A673 (cell line): ENCODE measurements at regions of chr3 and their contacts with region 1.

Region 1: GRCh38 chr3:146747928-146748327 is 142.8 kb upstream of the PLSCR5 start:
- DNase-seq: peak; percentile 82
- H3K4me3 ChIP-seq: no peak overlapping the region
- H3K27ac ChIP-seq: no peak overlapping the region
- H3K4me1 ChIP-seq: peaks cover 37% of the 10 kb centered on the region
- H3K27me3 ChIP-seq: no peaks in the 10 kb centered on the region
- CTCF ChIP-seq: peak; percentile 76

Region 2: GRCh38 chr3:146732325-146732724 is 15.6 kb before region 1 on chr3:
- CTCF ChIA-PET with region 1: no interaction called
- POLR2A ChIA-PET with region 1: no interaction called
- intact Hi-C with region 1: no loop called
- DNase-seq: no peak
- H3K4me3 ChIP-seq: no peak overlapping the region
- H3K27ac ChIP-seq: no peak overlapping the region
- H3K4me1 ChIP-seq: no peaks in the 10 kb centered on the region
- H3K27me3 ChIP-seq: no peaks in the 10 kb centered on the region
- CTCF ChIP-seq: no peak

Region 3: DNA sequence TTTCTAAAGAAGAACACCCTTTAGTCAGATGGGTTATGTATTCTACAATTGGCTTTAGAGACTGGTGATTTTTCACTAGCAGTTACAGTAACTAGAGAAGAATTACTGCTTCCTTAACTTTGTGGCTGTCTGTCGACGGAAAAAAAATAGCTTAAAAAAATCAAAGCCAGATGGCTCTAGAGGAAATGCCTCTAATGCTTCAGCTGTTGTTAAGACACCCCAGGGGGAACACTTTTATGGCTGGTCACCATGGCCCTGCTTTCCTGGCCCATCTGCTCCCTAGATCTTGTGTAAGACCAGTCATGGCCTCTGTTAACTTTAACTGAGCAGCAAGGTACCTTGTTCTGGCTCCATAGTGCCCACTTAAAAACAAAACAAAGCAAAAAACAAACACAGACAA is 55.8 kb after region 1 on chr3:
- CTCF ChIA-PET with region 1: no interaction called
- POLR2A ChIA-PET with region 1: no interaction called
- intact Hi-C with region 1: loop called (anchors 2 kb)
- DNase-seq: peak; percentile 91
- H3K4me3 ChIP-seq: no peak overlapping the region
- H3K27ac ChIP-seq: peak overlapping the region; percentile 61
- H3K4me1 ChIP-seq: peaks cover 38% of the 10 kb centered on the region
- H3K27me3 ChIP-seq: no peaks in the 10 kb centered on the region
- CTCF ChIP-seq: no peak

Region 4: DNA sequence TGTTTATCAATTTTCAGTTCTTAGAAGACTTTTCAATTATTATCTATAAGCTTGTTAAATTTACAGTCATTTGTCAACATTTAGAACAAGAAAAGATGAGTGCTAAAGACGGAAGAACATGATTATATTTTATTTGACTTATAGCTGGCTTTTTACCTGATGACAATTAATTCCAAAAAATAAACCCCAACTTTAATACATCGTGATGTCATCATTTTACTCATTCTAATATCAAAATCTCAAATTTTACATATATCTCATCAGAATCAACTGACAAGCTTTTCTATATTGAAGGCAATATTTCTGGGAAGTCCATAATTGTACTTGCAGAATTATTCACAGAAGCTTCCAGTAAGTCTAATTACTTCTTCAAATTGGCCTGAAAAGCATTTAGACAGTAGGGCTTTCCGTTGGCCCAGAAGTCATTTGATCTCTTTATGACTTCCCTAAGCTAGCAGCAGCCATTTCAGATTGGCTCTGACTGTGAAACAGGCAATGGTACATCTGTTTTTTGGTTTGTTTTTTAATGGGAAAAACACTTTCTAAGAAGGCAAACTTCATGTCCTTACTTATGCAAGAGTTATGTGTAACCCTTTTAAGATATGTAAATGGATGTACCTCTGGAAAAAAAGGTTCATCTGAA is 91.9 kb after region 1 on chr3:
- CTCF ChIA-PET with region 1: no interaction called
- POLR2A ChIA-PET with region 1: no interaction called
- intact Hi-C with region 1: no loop called
- DNase-seq: peak; percentile 7
- H3K4me3 ChIP-seq: no peak overlapping the region
- H3K27ac ChIP-seq: no peak overlapping the region
- H3K4me1 ChIP-seq: peaks cover 2% of the 10 kb centered on the region
- H3K27me3 ChIP-seq: peaks cover 23% of the 10 kb centered on the region
- CTCF ChIP-seq: no peak

Region 5: DNA sequence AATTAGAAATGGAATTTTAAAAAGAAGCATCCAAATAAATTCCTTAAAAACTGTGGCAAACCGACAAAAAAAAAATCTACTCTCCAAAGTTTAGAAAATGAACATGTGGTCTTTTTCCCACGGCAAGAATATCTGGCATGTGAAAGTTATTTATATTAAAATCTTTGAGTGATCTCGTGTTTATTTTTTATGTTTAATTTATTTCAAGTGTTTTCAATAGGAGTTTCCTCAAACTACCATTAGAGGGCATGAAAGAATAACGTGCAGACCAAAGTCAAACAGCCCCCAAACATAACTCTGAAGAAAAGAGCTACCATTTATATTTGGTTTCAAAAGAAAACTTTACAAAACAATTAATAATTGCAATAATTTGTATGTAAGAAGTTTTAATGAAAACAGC is 372.1 kb after region 1 on chr3:
- CTCF ChIA-PET with region 1: interaction called, 3 read pairs
- POLR2A ChIA-PET with region 1: no interaction called
- intact Hi-C with region 1: loop called (anchors 5 kb)
- DNase-seq: peak; percentile 47
- H3K4me3 ChIP-seq: no peak overlapping the region
- H3K27ac ChIP-seq: no peak overlapping the region
- H3K4me1 ChIP-seq: no peaks in the 10 kb centered on the region
- H3K27me3 ChIP-seq: no peaks in the 10 kb centered on the region
- CTCF ChIP-seq: peak; percentile 72

Region 6: DNA sequence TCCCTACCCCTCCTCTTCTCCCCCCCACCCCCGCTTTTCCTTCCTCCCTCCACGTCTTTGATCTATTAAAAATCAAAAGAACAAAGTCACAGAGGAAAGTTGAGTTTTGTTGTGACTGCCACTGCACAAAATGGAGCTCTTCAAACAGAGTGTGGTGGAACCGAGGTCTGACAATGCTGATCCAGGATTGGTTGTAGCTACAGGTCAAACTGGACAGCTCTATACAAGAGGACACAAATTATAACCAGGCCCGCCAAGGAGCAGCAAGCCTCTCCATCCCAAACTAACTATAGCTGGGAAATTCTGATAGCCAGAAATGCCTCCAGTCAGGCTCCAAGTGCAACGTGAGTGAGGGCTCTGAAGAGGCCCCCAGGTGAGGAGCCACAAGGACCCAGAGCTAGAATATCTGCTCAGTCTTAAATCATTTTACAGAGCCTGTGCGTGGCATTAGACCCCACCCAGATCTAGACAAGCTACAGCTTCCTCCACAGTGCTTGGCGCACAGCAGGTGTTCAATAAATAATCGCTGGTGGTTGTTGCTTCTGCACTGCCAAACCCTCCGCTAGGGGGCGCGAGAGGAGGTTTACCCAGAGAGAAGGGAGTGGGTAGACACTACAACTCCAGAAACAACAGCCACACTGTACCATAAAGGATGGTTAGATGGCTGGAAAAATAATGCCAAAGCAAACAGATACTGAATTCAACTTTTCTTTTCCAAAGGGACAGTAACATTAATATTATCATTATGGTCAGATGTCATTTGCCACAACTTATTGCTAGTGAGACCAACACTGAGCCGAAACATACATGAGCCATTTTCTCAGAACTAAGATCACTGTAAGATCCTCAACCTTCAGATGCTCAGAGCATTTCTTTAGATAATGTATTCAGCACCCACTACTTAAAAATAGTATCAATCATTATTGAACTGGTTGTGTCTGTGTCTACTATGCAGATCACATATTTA is 613.8 kb after region 1 on chr3:
- CTCF ChIA-PET with region 1: interaction called, 6 read pairs
- POLR2A ChIA-PET with region 1: no interaction called
- intact Hi-C with region 1: loop called (anchors 10 kb)
- DNase-seq: peak; percentile 81
- H3K4me3 ChIP-seq: no peak overlapping the region
- H3K27ac ChIP-seq: no peak overlapping the region
- H3K4me1 ChIP-seq: peaks cover 9% of the 10 kb centered on the region
- H3K27me3 ChIP-seq: peaks cover 95% of the 10 kb centered on the region
- CTCF ChIP-seq: peak; percentile 91